GM18951 (cell line): ENCODE measurements at regions of chr11 and their contacts with region 1.

Region 1: GRCh38 chr11:111230122-111230465 is 15.4 kb upstream of the POU2AF2 start:
- POLR2A ChIP-seq: no peak

Region 2: GRCh38 chr11:110447897-110448745 is 782.0 kb before region 1 on chr11:
- in situ Hi-C with region 1: loop called (anchors 10 kb)
- POLR2A ChIP-seq: no peak

Region 3: DNA sequence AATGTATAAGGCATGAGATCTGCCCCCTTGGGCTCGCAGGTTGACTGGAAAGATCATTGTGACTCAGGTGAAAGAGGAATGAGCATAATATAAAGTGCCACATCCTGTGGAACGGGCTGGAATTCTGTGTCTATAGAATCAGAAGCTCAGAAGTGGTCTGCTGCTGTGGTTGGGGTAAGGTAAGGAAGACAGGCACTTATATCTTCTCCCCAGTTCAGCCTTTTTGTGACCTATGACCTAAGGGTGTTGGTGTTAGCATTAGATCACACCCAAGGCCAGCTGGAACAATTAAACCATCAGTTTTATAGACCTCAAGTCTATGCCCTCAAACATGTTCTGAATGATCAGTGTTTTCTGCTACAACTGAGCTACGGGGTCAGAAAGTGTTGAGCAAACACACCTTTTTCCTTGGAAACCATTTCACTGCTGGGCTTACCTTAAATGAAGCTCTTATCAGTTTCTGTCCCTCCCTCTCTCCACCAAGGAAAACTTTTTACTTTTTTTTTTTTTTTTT is 52.5 kb after region 1 on chr11:
- in situ Hi-C with region 1: no loop called
- POLR2A ChIP-seq: no peak

Region 4: DNA sequence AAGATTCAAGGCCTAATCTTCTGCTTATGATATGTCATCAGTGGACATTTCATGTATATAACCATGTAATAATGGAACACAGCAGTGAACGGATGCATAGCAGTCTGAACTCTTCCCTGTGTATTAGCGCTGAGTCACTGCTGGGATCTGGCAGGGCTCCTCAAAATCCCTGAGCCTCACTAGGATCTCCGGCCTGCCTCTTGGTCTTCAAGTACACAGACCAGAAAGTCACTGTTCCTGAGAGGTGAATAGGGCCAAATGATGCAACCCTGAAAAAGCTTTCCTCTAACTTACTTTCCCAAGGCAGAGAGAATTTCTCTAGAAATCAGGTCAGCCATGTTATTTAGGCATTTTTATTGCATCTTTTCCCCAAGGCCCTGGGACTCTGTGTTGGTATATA is 113.9 kb after region 1 on chr11:
- in situ Hi-C with region 1: no loop called
- POLR2A ChIP-seq: no peak